ENCODE measurements at regions of chr19 and their contacts with region 1.

Region 1: DNA sequence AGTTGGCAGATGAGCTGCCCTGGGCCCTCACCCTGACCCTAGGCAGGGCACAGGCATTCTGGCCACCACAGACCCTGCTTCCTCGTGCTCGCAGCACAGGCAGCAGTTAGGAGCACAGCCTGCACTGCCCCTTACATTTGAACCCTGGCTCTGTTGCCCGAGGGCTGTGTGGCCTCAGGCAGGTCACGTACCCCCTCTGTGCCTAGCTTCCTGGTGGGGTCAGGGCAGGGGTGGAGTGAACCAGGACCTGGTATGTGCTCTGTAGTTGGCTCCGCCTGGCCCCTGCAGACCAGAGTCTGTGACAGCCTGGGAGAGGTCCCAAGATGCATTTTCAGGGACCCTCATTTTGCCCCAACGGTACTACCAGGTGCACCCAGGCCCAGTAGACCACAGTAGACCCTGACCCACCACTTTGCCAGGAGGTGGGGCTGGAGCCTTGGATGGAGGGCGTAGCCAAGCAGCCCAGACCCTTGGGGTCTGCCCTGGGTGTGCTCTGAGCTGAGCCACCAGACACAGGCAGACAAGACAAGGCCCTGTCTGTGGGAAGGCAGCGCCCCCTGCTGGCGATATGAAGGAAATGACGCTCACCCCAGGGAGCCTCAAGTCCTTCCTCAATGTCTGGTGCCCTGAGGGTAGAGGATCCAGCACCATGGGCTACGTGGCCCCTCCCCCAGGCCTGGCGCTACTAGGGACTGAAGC is 9.1 kb downstream of the LYL1 start:
- DNase-seq: peak; percentile 68 to 89 (median 79)
- ATAC-seq: peak; percentile 75 to 80
- H3K4me3 Mint-ChIP-seq: peak overlapping the region in 2 of 10 donors; percentile 58
- H3K27ac Mint-ChIP-seq: peak overlapping the region in 1 of 10 donors; percentile 54
- H3K4me1 Mint-ChIP-seq: peaks cover 14 to 23% (median 21%) of the 10 kb centered on the region in 4 donors
- H3K27me3 Mint-ChIP-seq: peaks cover 6 to 19% (median 6%) of the 10 kb centered on the region in 5 donors

Region 2: DNA sequence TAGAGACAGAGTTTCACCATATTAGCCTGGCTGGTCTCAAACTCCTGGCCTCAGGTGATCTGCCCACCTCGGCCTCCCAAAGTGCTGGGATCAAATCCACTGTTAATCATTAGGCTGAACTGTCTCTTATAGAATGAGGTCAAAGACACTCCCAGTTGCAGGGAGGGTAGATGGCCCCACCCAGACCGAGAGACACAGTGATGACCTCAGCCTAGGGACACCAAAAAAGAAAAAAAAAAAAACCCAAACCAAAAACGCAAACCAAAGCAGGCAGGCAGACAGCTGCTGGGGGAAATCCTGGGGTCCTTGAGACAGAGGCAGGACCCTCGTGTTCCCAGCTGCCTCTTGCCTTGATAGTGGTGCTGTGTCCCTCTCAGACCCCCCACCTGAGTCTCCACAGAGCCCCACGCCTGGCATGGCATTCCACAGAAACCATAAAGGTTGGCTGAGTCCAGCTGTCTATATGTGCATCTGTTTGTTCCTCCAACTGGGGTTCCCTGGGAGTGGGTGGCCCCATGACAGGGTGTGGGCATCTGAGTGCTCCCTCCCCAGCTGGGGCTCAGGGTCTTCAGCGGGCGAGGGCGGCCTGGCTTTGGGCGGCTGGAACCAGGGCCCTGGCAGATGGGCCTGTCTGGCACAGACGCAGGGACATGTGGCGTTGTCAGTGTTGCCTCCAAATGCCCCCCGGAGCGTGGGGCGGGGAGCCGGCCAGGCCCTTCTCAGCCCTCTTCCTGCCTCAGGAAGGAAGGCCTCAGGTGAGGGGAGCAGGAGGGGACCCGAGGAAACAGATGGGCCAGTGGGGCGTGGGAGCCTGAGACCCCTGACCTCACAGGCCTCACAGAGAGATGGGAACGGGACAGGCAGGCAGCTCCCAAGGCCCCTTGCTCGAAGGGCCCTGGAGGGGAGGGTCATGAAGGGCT is 119.0 kb before region 1 on chr19:
- POLR2A ChIA-PET with region 1: interaction called, 18 read pairs
- DNase-seq: no peak
- ATAC-seq: no peak
- H3K4me3 Mint-ChIP-seq: no peak overlapping the region
- H3K27ac Mint-ChIP-seq: no peak overlapping the region
- H3K4me1 Mint-ChIP-seq: peaks cover 1 to 6% (median 4%) of the 10 kb centered on the region in 4 donors
- H3K27me3 Mint-ChIP-seq: peaks cover 4 to 21% (median 12%) of the 10 kb centered on the region in 5 donors

Region 3: GRCh38 chr19:13104360-13104847 is 10.8 kb after region 1 on chr19:
- POLR2A ChIA-PET with region 1: interaction called, 17 read pairs
- DNase-seq: peak; percentile 42 to 79 (median 64)
- ATAC-seq: peak; percentile 42 to 60
- H3K4me3 Mint-ChIP-seq: peak overlapping the region; percentile 88 to 96 (median 91)
- H3K27ac Mint-ChIP-seq: peak overlapping the region; percentile 79 to 96 (median 92)
- H3K4me1 Mint-ChIP-seq: peaks cover 14 to 56% (median 47%) of the 10 kb centered on the region in 4 donors
- H3K27me3 Mint-ChIP-seq: no peaks in the 10 kb centered on the region

Region 4: GRCh38 chr19:13146763-13147563 is 53.4 kb after region 1 on chr19:
- POLR2A ChIA-PET with region 1: no interaction called
- DNase-seq: no peak
- ATAC-seq: no peak
- H3K4me3 Mint-ChIP-seq: peak overlapping the region in 2 of 10 donors; percentile 43 to 45
- H3K27ac Mint-ChIP-seq: peak overlapping the region in 2 of 10 donors; percentile 18 to 21
- H3K4me1 Mint-ChIP-seq: peaks cover 16 to 33% (median 24%) of the 10 kb centered on the region in 4 donors
- H3K27me3 Mint-ChIP-seq: no peaks in the 10 kb centered on the region